ENCODE measurements at regions of chr15 and their contacts with region 1.

Region 1: DNA sequence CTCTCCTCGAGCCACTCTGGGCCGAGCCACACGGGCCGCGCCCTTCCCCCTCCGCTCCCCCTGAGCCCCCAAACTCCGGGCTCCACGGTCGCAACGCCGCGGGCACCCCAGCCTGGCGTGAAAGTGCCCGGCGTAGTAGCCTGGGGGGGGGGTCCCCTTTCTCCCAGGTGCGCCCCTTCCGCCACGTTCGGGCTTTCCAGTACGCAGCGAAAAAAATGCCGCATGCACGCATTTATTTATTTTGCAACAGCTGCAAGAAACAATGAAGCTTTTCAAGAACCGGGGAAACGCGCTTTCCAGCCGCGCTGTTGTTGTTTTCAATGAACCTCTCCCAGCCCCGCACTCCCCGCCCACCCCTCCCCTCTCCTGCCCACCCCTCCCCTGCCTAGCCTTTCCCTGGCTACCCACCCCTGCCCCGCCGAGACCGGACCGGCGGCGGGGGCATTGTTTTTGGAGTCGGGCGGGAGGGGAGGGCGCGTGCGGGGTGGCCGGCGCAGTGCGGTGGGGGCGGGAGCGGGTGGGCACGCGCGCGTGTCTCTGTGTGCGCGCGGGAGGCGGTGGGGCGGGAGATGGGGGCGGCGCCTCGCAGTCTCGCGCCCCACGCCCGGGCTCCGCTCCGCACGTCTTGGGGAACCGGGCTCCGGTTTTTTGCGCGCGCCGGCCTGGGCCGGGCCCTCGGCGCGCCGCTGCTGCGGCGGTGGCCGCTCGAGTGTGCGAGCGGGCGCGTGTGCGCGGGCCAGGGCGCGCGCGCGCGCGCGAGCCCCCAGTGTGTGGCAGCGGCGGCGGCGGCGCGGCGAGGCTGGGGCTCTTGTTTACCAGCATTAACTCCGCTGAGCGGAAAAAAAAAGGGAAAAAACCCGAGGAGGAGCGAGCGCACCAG is at the start of gene IGF1R:
- DNase-seq: peak; percentile 76 to 88 (median 87)
- H3K4me3 ChIP-seq: peak within 1 kb of the TSS in 1 of 2 donors; percentile 59
- H3K4me3 Mint-ChIP-seq: peak within 1 kb of the TSS; percentile 84 to 88 (median 87)
- H3K27ac ChIP-seq: no peak within 1 kb of the TSS
- H3K27ac Mint-ChIP-seq: peak within 1 kb of the TSS in 6 of 7 donors; percentile 67 to 91 (median 84)
- H3K4me1 ChIP-seq: peaks cover 23% of the 10 kb centered on the region
- H3K4me1 Mint-ChIP-seq: peaks cover 17 to 33% (median 24%) of the 10 kb centered on the region in 4 donors
- H3K27me3 ChIP-seq: peaks cover 14% of the 10 kb centered on the region
- H3K27me3 Mint-ChIP-seq: peaks cover 14 to 21% of the 10 kb centered on the region in 2 donors
- total RNA-seq, gene IGF1R: 47.2 to 49.2 TPM

Region 2: GRCh38 chr15:98599909-98600691 is 47.9 kb before region 1 on chr15:
- CTCF ChIA-PET with region 1: interaction called, 3 read pairs
- POLR2A ChIA-PET with region 1: no interaction called
- intact Hi-C with region 1: loop called (anchors 5 kb)
- DNase-seq: peak in 3 of 5 donors; percentile 7 to 9 (median 8)
- H3K4me3 ChIP-seq: peak overlapping the region in 1 of 2 donors; percentile 23
- H3K4me3 Mint-ChIP-seq: peak overlapping the region; percentile 78 to 92 (median 87)
- H3K27ac ChIP-seq: no peak overlapping the region
- H3K27ac Mint-ChIP-seq: peak overlapping the region in 6 of 7 donors; percentile 16 to 94 (median 80)
- H3K4me1 ChIP-seq: peaks cover 11% of the 10 kb centered on the region
- H3K4me1 Mint-ChIP-seq: peaks cover 6 to 14% (median 11%) of the 10 kb centered on the region in 4 donors
- H3K27me3 ChIP-seq: no peaks in the 10 kb centered on the region
- H3K27me3 Mint-ChIP-seq: peaks cover 5 to 7% of the 10 kb centered on the region in 2 donors

Region 3: GRCh38 chr15:98658831-98659699 is 11.1 kb after region 1 on chr15:
- CTCF ChIA-PET with region 1: interaction called, 26 read pairs
- POLR2A ChIA-PET with region 1: interaction called, 4 read pairs
- intact Hi-C with region 1: loop called (anchors 1 kb)
- DNase-seq: peak in 4 of 5 donors; percentile 27 to 40 (median 35)
- H3K4me3 ChIP-seq: no peak overlapping the region
- H3K4me3 Mint-ChIP-seq: no peak overlapping the region
- H3K27ac ChIP-seq: no peak overlapping the region
- H3K27ac Mint-ChIP-seq: no peak overlapping the region
- H3K4me1 ChIP-seq: peaks cover 3% of the 10 kb centered on the region
- H3K4me1 Mint-ChIP-seq: peaks cover 0 to 18% (median 10%) of the 10 kb centered on the region in 4 donors
- H3K27me3 ChIP-seq: no peaks in the 10 kb centered on the region
- H3K27me3 Mint-ChIP-seq: peaks cover 15 to 16% of the 10 kb centered on the region in 2 donors

Region 4: DNA sequence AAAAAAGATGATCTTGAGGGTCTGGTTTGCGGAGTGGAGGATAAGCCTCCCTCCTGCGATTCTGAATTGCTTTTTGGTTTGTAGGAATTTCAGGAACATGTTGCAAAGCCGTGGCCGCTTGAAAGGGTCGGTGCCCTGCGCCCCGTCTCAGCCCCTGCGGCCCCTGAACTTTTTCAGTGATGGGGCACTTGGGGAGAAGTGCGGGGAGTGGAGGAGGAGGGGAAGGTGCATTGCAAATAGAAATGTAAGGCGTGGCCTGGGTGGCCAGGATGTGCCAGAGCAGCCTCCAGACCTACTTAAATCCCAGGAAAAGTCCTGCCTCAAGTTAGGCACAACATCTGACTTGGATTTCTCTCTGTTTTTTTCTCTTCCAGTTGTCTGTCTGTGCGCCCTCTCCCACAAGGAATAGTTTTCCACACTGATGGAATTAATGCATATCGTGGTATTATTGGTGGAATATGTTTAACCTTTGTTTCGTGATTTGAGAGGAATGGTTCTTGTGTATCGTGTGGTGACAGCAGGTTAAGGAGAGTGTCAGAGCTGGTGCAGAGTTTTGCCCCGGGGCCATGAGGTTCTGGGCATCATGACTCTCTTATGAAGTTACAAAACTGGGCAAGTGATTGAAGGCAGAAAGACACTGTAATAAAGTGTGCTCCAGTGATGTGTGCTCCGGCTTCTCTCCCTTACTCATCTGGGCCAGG is 205.7 kb after region 1 on chr15:
- CTCF ChIA-PET with region 1: interaction called, 11 read pairs
- POLR2A ChIA-PET with region 1: interaction called, 5 read pairs
- intact Hi-C with region 1: no loop called
- DNase-seq: no peak
- H3K4me3 ChIP-seq: peak overlapping the region in 1 of 2 donors; percentile 75
- H3K4me3 Mint-ChIP-seq: peak overlapping the region; percentile 11 to 99 (median 94)
- H3K27ac ChIP-seq: no peak overlapping the region
- H3K27ac Mint-ChIP-seq: peak overlapping the region; percentile 11 to 98 (median 95)
- H3K4me1 ChIP-seq: peaks cover 30% of the 10 kb centered on the region
- H3K4me1 Mint-ChIP-seq: peaks cover 24 to 53% (median 39%) of the 10 kb centered on the region in 4 donors
- H3K27me3 ChIP-seq: no peaks in the 10 kb centered on the region
- H3K27me3 Mint-ChIP-seq: no peaks in the 10 kb centered on the region

Region 5: DNA sequence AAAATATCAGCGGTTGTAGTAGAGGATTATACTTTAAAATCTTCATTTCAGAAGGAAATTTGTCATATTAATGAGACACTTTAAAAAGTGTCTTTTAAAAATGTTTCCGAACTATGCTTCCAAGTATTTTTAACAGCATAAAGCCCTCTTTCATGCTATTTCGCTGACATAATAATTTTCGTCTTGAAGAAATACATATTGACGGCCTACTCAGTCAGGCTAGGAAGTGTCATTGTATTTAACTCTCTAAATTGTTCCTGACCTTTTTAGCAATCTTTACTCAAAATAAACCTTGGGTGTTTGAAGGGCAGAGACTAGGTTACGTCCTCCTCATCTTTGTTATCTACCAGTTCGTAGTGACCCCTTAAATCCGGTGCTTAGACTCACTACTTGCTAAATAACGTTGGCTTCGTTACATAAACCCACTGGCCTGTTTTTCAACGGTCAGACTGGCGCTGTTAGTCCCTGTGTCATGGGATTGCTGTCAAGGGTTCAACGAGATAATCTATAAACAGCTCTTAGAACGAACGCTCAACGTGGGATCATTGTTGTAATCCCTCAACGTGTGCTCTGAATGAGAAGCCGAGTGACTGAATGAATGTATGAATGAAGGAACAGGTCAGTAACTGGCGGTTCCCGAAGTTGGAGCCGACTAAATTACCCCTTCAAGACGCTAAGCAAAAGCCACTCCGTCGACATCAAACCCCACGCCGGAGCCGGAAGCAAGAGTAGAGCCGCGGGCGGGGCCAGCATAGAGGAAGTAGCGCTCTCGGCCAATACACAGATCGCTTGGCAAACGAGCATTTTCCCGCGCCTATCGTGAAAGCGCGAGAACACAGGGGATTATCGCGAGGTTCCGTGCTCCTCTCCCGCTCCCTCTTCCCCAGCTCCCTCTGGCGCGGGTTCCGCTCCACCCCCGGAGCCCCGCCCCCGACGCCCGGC is 602.8 kb after region 1 on chr15:
- CTCF ChIA-PET with region 1: no interaction called
- POLR2A ChIA-PET with region 1: no interaction called
- intact Hi-C with region 1: loop called (anchors 5 kb)
- DNase-seq: peak; percentile 90 to 95 (median 93)
- H3K4me3 ChIP-seq: peak overlapping the region; percentile 47 to 73
- H3K4me3 Mint-ChIP-seq: peak overlapping the region; percentile 84 to 96 (median 92)
- H3K27ac ChIP-seq: peak overlapping the region; percentile 60
- H3K27ac Mint-ChIP-seq: peak overlapping the region; percentile 70 to 95 (median 90)
- H3K4me1 ChIP-seq: peaks cover 31% of the 10 kb centered on the region
- H3K4me1 Mint-ChIP-seq: peaks cover 17 to 33% (median 29%) of the 10 kb centered on the region in 4 donors
- H3K27me3 ChIP-seq: no peaks in the 10 kb centered on the region
- H3K27me3 Mint-ChIP-seq: no peaks in the 10 kb centered on the region

Region 6: DNA sequence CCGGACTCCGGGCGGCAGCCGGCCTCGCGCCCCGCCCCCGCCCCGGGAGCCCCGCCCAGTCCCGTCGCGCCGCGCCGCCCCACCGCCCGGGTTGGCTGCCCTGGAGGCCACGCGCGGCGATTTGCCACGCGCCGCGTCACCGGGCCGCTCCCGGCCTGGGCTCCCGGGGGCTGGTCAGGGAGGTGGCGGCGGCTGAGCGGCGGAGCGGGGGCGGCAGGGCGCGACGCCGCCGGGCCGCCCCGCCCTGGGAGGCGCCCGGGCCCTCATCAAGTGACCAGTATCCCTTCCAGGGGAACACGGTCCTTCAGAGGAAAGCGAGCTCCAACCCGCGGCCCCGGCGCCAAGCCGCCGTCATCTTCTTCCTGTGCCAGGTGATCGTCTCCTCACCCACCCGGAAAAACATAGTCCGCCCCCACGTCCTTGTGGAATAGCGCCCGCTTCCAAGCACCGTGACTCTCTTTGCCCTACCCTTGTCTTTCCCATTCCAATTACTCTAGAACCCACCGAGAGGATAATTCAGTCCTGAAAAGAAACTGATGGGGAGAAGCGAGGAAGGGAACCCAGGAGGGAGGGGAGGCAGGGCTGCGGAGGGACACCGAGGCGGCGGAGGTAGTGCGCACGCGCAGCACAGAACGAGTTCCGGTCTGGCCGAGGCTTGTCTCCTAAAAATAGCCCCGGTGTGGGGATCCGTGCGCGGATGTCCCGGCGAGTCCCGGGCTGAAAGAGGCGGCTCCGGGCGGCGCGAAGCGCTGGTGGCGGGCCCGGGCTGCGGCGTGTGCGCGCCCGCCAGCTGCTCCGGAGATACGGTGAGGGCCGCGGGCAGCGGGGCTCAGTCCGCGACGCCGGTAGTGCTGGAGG is 917.5 kb after region 1 on chr15 and contains the start of gene MEF2A:
- CTCF ChIA-PET with region 1: no interaction called
- POLR2A ChIA-PET with region 1: no interaction called
- intact Hi-C with region 1: loop called (anchors 5 kb)
- DNase-seq: peak; percentile 92 to 94 (median 92)
- H3K4me3 ChIP-seq: peak within 1 kb of the TSS; percentile 63 to 99
- H3K4me3 Mint-ChIP-seq: peak within 1 kb of the TSS; percentile 95 to 100 (median 98)
- H3K27ac ChIP-seq: peak within 1 kb of the TSS; percentile 85
- H3K27ac Mint-ChIP-seq: peak within 1 kb of the TSS; percentile 95 to 99 (median 97)
- H3K4me1 ChIP-seq: peaks cover 29% of the 10 kb centered on the region
- H3K4me1 Mint-ChIP-seq: peaks cover 28 to 45% (median 36%) of the 10 kb centered on the region in 4 donors
- H3K27me3 ChIP-seq: no peaks in the 10 kb centered on the region
- H3K27me3 Mint-ChIP-seq: peaks cover 0 to 3% of the 10 kb centered on the region in 2 donors
- total RNA-seq, gene MEF2A: 27.6 to 27.8 TPM

Region 7: GRCh38 chr15:99733268-99734039 is 1085.4 kb after region 1 on chr15 and contains the start of gene LYSMD4:
- CTCF ChIA-PET with region 1: no interaction called
- POLR2A ChIA-PET with region 1: no interaction called
- intact Hi-C with region 1: loop called (anchors 5 kb)
- DNase-seq: peak; percentile 95 to 97 (median 96)
- H3K4me3 ChIP-seq: peak within 1 kb of the TSS; percentile 6 to 67
- H3K4me3 Mint-ChIP-seq: peak within 1 kb of the TSS; percentile 83 to 95 (median 87)
- H3K27ac ChIP-seq: peak within 1 kb of the TSS; percentile 46
- H3K27ac Mint-ChIP-seq: peak within 1 kb of the TSS; percentile 80 to 97 (median 88)
- H3K4me1 ChIP-seq: peaks cover 14% of the 10 kb centered on the region
- H3K4me1 Mint-ChIP-seq: peaks cover 12 to 24% (median 16%) of the 10 kb centered on the region in 4 donors
- H3K27me3 ChIP-seq: no peaks in the 10 kb centered on the region
- H3K27me3 Mint-ChIP-seq: no peaks in the 10 kb centered on the region
- total RNA-seq, gene LYSMD4: 18.0 to 19.0 TPM

Measured in CD4-positive, alpha-beta memory T cell (primary cell).